ENCODE measurements at regions of chr9 and their contacts with region 1.

Region 1: DNA sequence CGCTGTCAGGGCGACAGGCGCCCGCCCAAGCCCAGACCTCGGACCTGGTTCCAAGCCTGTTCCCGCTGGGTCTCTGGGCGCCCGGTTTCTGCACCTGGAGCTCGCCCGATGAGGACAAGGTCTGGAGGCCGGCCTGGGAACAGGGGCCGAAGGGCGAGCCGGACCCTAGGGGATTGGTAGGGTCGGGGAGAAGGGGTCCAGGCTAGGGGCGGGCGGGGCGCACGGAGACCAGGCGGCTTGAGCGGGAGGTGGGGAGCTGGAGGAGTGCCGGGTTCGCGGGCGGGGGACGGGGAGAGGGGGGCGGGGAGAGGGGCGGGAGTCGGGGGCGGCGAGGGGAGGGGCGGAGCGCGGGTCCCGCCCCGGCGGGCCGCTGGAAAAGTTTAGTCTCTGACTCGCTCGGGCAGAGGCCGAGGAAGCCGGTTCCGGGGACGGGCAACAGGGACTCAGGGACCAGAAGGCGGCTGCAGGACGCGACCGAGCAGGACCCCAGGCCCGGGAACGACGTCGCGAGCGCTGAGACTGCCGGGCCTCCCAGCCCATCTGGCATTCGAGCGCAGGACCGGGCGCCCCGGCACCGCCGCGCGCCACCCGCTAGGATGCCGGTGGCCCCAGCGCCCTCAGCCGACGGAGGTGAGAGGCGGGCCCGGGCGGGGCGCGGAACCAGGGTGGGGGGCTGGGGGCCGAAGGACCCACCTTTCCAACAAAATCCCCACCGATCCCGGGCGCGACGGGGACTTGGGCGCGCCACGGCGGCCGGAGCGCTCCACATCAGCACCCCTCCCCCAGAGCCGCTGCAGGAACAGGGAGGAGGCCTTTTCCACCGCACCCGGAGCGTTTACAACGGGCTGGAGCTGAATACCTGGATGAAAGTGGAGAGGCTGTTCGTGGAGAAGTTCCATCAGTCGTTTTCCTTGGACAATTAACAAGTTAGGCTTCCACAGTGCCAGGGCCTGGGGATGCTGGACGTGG is at the start of gene S1PR3:
- DNase-seq: peak; percentile 43 to 86
- H3K4me3 ChIP-seq: peak within 1 kb of the TSS; percentile 96 to 97
- H3K27ac ChIP-seq: peak within 1 kb of the TSS; percentile 89 to 92
- H3K4me1 ChIP-seq: peaks cover 0 to 57% (median 35%) of the 10 kb centered on the region in 4 donors
- H3K27me3 ChIP-seq: no peaks in the 10 kb centered on the region
- CTCF ChIP-seq: no peak

Region 2: GRCh38 chr9:87713278-87713987 is 1277.9 kb before region 1 on chr9:
- intact Hi-C with region 1: loop called (anchors 10 kb)
- DNase-seq: peak; percentile 94 to 95
- H3K4me3 ChIP-seq: peak overlapping the region; percentile 33 to 44
- H3K27ac ChIP-seq: peak overlapping the region; percentile 73 to 79
- H3K4me1 ChIP-seq: peaks cover 0 to 35% (median 17%) of the 10 kb centered on the region in 4 donors
- H3K27me3 ChIP-seq: no peaks in the 10 kb centered on the region
- CTCF ChIP-seq: peak; percentile 13 to 18

Region 3: GRCh38 chr9:88706193-88707118 is 284.9 kb before region 1 on chr9:
- intact Hi-C with region 1: no loop called
- DNase-seq: no peak
- H3K4me3 ChIP-seq: no peak overlapping the region
- H3K27ac ChIP-seq: no peak overlapping the region
- H3K4me1 ChIP-seq: no peaks in the 10 kb centered on the region
- H3K27me3 ChIP-seq: no peaks in the 10 kb centered on the region
- CTCF ChIP-seq: no peak

Region 4: DNA sequence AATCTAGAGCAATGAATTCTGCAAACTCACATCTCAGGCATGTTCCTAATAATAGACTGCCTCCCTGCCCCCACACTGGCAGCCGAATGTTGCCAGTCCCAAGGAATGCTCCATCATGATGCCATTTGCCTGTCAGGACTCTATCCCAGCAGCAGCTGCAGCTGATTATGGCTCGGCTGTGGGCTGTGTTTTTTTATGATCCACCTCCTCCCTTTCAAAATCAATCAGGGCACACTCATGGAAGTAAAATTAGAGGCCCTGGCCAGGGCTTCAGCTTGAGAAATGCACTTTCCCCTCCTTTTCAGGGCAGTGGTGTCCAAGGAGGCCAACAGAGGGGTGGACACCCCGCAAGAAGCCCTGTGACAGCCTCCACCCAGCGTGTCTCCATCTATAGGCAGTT is 176.8 kb before region 1 on chr9:
- intact Hi-C with region 1: loop called (anchors 10 kb)
- DNase-seq: peak; percentile 74 to 94
- H3K4me3 ChIP-seq: no peak overlapping the region
- H3K27ac ChIP-seq: peak overlapping the region; percentile 69 to 83
- H3K4me1 ChIP-seq: peaks cover 0 to 41% (median 29%) of the 10 kb centered on the region in 4 donors
- H3K27me3 ChIP-seq: no peaks in the 10 kb centered on the region
- CTCF ChIP-seq: no peak

Measured in tibial artery (tissue), 4 donors.